GM10248 (cell line): ENCODE measurements at regions of chr3 and their contacts with region 1.

Region 1: GRCh38 chr3:13012228-13012691 is 61.0 kb downstream of the IQSEC1 start:
- DNase-seq: peak; percentile 65
- CTCF ChIP-seq: no peak

Region 2: GRCh38 chr3:12916159-12916558 is 96.1 kb before region 1 on chr3:
- CTCF ChIA-PET with region 1: no interaction called
- POLR2A ChIA-PET with region 1: no interaction called
- DNase-seq: no peak
- CTCF ChIP-seq: no peak

Region 3: DNA sequence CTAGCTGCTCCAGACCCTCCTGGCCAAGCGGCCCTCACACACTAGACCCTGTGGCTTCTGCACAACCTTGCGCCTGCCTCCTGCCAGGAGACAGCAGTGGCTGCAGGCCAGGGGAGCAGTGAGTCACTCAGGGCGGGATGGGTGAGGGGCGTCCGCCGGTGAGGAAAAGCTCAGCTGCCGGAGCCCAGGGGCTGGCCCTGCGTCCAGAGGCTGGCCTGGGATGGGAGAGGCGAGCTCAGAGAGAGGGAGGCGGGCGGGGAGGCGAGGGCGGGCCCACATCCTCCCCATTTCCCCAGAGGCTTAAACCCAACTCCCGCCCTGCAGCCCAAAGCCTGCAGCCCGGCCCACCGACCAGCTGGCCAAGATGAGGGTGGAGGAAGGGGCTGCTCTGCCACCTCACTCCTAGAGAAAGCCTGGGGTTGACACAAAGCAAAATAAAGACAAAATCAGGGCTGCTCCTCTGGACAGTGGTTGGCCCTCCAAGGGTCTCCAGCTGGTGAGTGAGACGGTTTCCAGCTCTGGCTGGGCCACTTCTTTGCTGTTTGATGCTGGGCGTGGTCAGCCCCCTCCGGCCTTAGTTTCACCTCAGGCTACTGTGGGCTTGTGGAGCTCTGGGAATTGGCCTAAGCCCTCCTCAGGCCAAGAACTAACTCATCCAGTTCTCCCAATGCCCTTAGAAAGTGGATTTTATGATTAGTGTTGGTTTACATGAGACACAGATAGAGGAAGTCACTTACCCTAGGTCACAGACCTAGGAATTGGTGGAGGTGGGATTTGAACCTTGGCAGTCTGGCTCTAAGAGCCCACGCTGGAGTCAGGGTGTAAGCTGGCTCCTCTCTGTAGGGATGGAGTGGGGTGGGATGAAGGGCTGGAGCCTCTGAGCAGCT is 10.3 kb after region 1 on chr3:
- CTCF ChIA-PET with region 1: interaction called, 9 read pairs
- POLR2A ChIA-PET with region 1: interaction called, 20 read pairs
- DNase-seq: peak; percentile 75
- CTCF ChIP-seq: no peak

Region 4: GRCh38 chr3:13045904-13046568 is 33.8 kb after region 1 on chr3:
- CTCF ChIA-PET with region 1: interaction called, 22 read pairs
- POLR2A ChIA-PET with region 1: interaction called, 3 read pairs
- DNase-seq: peak; percentile 83
- CTCF ChIP-seq: no peak